Endothelial cell of umbilical vein (primary cell): ENCODE measurements at regions of chr6 and their contacts with region 1.

Region 1: GRCh38 chr6:37018198-37019064 is 13.0 kb downstream of the FGD2 start:
- DNase-seq: peak; percentile 85
- H3K4me3 ChIP-seq: no peak overlapping the region
- H3K27ac ChIP-seq: no peak overlapping the region
- H3K4me1 ChIP-seq: peaks cover 10% of the 10 kb centered on the region
- H3K27me3 ChIP-seq: no peaks in the 10 kb centered on the region
- CTCF ChIP-seq: peak; percentile 93 to 97
- POLR2A ChIP-seq: no peak

Region 2: GRCh38 chr6:36576561-36576960 is 441.9 kb before region 1 on chr6:
- CTCF ChIA-PET with region 1: no interaction called
- POLR2A ChIA-PET with region 1: no interaction called
- dilution Hi-C with region 1: no loop called
- intact Hi-C with region 1: no loop called
- DNase-seq: no peak
- H3K4me3 ChIP-seq: no peak overlapping the region
- H3K27ac ChIP-seq: no peak overlapping the region
- H3K4me1 ChIP-seq: no peaks in the 10 kb centered on the region
- H3K27me3 ChIP-seq: no peaks in the 10 kb centered on the region
- CTCF ChIP-seq: no peak
- POLR2A ChIP-seq: no peak

Region 3: DNA sequence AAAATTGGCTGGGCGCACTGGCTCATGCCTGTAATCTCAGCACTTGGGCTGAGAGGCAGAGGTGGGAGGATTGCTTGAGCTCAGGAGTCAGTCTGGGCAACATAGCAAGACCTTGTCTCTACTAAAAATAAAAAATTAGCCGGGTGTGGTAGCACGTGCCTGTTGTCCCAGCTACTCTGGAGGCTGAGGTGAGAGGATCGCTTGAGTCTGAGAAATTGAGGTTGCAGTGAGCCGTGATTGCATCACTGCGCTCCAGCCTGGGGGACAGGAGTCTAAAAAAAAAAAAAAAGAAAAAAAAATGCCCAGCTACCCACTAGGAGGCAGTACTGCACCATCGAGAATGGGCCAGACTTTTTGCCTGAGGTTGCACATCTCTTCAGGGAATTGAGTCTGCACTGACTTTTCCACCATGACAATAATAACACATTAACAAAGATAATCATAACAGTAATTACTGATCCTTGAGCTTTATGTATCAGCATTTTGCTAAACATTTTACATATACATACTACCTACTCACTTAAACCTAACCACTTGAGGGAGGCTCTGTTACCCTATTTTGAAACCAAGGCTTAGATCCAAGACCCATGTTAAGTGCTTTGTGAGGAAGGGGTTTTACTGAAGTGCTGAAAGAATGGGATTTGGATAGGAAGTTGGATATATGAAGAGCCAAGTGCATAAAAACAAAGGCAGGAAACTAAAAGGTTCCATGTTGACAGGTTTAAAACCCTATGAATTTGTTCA is 403.2 kb before region 1 on chr6:
- CTCF ChIA-PET with region 1: interaction called, 16 read pairs
- POLR2A ChIA-PET with region 1: no interaction called
- dilution Hi-C with region 1: no loop called
- intact Hi-C with region 1: no loop called
- DNase-seq: peak; percentile 85
- H3K4me3 ChIP-seq: no peak overlapping the region
- H3K27ac ChIP-seq: no peak overlapping the region
- H3K4me1 ChIP-seq: peaks cover 17% of the 10 kb centered on the region
- H3K27me3 ChIP-seq: no peaks in the 10 kb centered on the region
- CTCF ChIP-seq: peak; percentile 65 to 74
- POLR2A ChIP-seq: no peak

Region 4: GRCh38 chr6:36851149-36851614 is 167.2 kb before region 1 on chr6:
- CTCF ChIA-PET with region 1: interaction called, 39 read pairs
- POLR2A ChIA-PET with region 1: no interaction called
- dilution Hi-C with region 1: no loop called
- intact Hi-C with region 1: no loop called
- DNase-seq: peak; percentile 81
- H3K4me3 ChIP-seq: no peak overlapping the region
- H3K27ac ChIP-seq: no peak overlapping the region
- H3K4me1 ChIP-seq: peaks cover 30% of the 10 kb centered on the region
- H3K27me3 ChIP-seq: no peaks in the 10 kb centered on the region
- CTCF ChIP-seq: peak; percentile 70 to 85
- POLR2A ChIP-seq: no peak

Region 5: DNA sequence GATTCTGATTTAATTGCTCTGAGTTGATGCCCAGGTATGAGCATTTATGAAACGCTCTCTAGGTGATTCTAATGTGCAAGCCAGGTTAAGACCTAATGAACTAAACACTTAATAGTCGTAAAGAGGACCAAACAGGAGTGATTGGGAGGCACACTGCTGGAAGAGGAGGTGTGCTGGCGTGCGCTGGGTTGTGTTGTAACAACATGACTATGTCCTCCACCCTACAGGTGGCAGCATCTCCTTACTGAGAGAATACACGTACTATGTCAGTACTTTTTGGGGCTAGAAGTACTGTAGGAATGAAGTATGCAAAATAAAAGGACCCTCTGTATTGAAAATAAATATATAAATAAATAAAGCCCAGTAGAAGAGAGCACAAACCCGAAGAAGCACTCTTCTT is 120.8 kb before region 1 on chr6:
- CTCF ChIA-PET with region 1: interaction called, 19 read pairs
- POLR2A ChIA-PET with region 1: no interaction called
- dilution Hi-C with region 1: no loop called
- intact Hi-C with region 1: no loop called
- DNase-seq: peak; percentile 5
- H3K4me3 ChIP-seq: no peak overlapping the region
- H3K27ac ChIP-seq: no peak overlapping the region
- H3K4me1 ChIP-seq: no peaks in the 10 kb centered on the region
- H3K27me3 ChIP-seq: no peaks in the 10 kb centered on the region
- CTCF ChIP-seq: no peak
- POLR2A ChIP-seq: no peak

Region 6: GRCh38 chr6:36938536-36938935 is 79.9 kb before region 1 on chr6:
- CTCF ChIA-PET with region 1: no interaction called
- POLR2A ChIA-PET with region 1: no interaction called
- dilution Hi-C with region 1: no loop called
- intact Hi-C with region 1: no loop called
- DNase-seq: no peak
- H3K4me3 ChIP-seq: no peak overlapping the region
- H3K27ac ChIP-seq: no peak overlapping the region
- H3K4me1 ChIP-seq: peaks cover under 1% of the 10 kb centered on the region
- H3K27me3 ChIP-seq: peaks cover 0 to 3% of the 10 kb centered on the region in 2 experiments
- CTCF ChIP-seq: no peak
- POLR2A ChIP-seq: no peak

Region 7: DNA sequence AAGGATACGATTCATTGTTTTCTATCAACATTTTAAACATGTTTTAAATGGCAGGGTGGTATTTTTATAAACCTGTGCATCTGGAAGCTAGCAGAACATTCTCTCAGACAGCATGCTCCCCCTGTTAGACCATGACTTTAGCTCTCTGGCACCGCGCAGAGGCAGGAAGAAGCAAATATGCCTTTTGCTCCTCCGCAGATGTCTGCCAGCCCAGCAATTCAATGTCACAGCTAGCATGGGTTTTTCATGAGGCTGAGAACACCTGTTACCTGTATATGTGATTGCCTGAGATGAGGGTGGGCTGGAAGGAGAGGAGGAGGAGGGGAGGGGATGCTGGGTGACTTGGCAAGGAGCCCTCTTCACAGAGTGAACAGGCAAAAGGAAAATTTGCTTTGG is 39.1 kb before region 1 on chr6:
- CTCF ChIA-PET with region 1: interaction called, 40 read pairs
- POLR2A ChIA-PET with region 1: no interaction called
- dilution Hi-C with region 1: no loop called
- intact Hi-C with region 1: loop called (anchors 1 kb)
- DNase-seq: peak; percentile 47
- H3K4me3 ChIP-seq: no peak overlapping the region
- H3K27ac ChIP-seq: no peak overlapping the region
- H3K4me1 ChIP-seq: peaks cover 18% of the 10 kb centered on the region
- H3K27me3 ChIP-seq: no peaks in the 10 kb centered on the region
- CTCF ChIP-seq: peak; percentile 43 to 53
- POLR2A ChIP-seq: no peak

Region 8: GRCh38 chr6:37051138-37052026 is 33.0 kb after region 1 on chr6:
- CTCF ChIA-PET with region 1: interaction called, 22 read pairs
- POLR2A ChIA-PET with region 1: no interaction called
- dilution Hi-C with region 1: no loop called
- intact Hi-C with region 1: no loop called
- DNase-seq: peak; percentile 79
- H3K4me3 ChIP-seq: no peak overlapping the region
- H3K27ac ChIP-seq: no peak overlapping the region
- H3K4me1 ChIP-seq: no peaks in the 10 kb centered on the region
- H3K27me3 ChIP-seq: peaks cover 0 to 4% of the 10 kb centered on the region in 2 experiments
- CTCF ChIP-seq: peak; percentile 81 to 93
- POLR2A ChIP-seq: no peak

Region 9: DNA sequence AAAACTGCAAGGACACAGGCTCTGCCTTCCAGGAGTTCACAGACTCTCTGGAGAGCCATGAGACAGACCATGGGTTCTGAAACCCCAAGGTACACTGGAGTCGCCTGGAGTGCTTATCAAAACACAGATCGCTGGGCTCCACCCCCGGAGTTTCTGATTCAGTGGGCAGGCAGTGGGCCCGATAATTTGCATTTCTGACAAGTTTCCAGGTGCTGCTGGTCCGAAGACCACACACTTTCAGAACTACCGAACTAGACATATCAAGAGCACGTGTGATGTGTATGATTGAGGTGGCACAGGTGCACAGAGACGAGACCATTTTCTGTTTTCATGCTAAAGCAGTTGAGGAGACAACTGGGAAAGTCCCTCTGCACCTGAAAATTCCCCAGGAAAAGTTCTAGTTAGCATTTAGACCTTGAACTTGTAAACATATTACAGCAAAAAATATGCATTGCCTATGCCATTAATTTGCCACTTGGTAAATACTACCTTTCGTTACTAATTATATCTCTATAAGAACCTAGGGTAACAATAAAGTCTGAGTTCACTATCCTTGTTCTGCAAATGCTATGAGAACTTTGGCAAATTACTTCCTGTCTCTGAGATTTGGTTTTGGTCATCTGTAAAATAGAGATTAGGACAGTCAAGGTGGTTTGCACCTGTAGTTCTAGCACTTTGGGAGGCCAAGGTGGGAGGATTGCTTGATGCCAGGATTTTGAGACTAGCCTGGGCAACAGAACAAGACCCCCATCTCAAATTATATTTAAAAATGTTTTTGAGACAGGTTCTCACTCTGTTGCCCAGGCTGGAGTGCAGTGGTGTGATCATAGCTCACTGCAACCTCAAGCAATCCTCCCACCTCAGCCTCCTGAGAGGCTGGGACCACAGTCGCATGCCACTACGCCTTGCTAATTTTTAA is 137.2 kb after region 1 on chr6:
- CTCF ChIA-PET with region 1: no interaction called
- POLR2A ChIA-PET with region 1: no interaction called
- dilution Hi-C with region 1: no loop called
- intact Hi-C with region 1: no loop called
- DNase-seq: no peak
- H3K4me3 ChIP-seq: no peak overlapping the region
- H3K27ac ChIP-seq: no peak overlapping the region
- H3K4me1 ChIP-seq: peaks cover 3% of the 10 kb centered on the region
- H3K27me3 ChIP-seq: peaks cover 2 to 7% of the 10 kb centered on the region in 2 experiments
- CTCF ChIP-seq: no peak
- POLR2A ChIP-seq: no peak